ENCODE measurements at regions of chr6 and their contacts with region 1.

Region 1: DNA sequence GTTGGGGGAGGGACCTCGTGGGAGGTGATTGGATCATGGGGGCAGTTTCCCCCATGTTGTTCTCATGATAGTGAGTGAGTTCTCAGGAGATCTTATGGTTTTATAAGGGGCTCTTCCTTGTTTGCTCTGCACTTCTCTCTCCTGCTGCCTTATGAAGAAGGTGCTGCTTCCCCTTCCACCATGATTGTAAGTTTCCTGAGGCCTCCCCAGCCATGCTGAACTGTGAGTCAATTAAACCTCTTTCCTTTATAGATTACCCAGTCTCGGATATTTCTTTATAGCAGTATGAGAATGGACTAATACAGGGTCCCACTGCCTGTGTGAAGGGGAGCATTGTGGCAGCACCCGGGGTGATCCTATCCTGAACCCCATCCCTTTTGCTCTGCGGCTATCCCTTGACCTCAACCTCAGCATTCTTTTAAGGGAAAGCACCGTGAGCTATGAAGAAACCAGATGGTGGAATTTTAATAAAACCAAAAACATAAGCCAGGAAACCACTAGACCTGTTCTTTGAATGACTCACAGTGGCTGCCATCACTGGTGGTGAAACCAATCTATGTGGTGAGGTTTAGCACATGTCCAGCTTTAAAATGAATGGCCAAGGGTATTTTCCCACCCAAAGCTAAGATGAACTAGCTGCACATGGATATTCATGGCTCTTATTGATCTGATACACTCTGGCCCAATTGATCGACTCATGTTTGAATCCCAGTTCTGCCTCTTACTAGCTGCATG is 62.2 kb downstream of the ZDHHC14 start:
- DNase-seq: peak; percentile 49
- H3K4me3 Mint-ChIP-seq: no peak overlapping the region
- H3K27ac Mint-ChIP-seq: peak overlapping the region; percentile 0
- H3K4me1 Mint-ChIP-seq: peaks cover 16% of the 10 kb centered on the region
- H3K27me3 Mint-ChIP-seq: peaks cover 2% of the 10 kb centered on the region

Region 2: GRCh38 chr6:157428427-157429202 is 14.6 kb before region 1 on chr6:
- CTCF ChIA-PET with region 1: interaction called, 3 read pairs
- POLR2A ChIA-PET with region 1: interaction called, 10 read pairs
- intact Hi-C with region 1: no loop called
- DNase-seq: peak; percentile 88
- H3K4me3 Mint-ChIP-seq: no peak overlapping the region
- H3K27ac Mint-ChIP-seq: peak overlapping the region; percentile 74
- H3K4me1 Mint-ChIP-seq: peaks cover 37% of the 10 kb centered on the region
- H3K27me3 Mint-ChIP-seq: peaks cover 10% of the 10 kb centered on the region

Region 3: GRCh38 chr6:157527471-157527907 is 84.3 kb after region 1 on chr6:
- CTCF ChIA-PET with region 1: no interaction called
- POLR2A ChIA-PET with region 1: no interaction called
- intact Hi-C with region 1: no loop called
- DNase-seq: peak; percentile 22
- H3K4me3 Mint-ChIP-seq: no peak overlapping the region
- H3K27ac Mint-ChIP-seq: no peak overlapping the region
- H3K4me1 Mint-ChIP-seq: peaks cover 13% of the 10 kb centered on the region
- H3K27me3 Mint-ChIP-seq: no peaks in the 10 kb centered on the region

Measured in activated CD4-positive, alpha-beta memory T cell treated with anti-CD3 and anti-CD28 coated beads for 36 hours (primary cell).